Activated T-helper 2 cell treated with anti-CD3 and anti-CD28 coated beads, Interferon-gamma antibody, Interleukin-2, Interleukin-4, amounts not matched to agents 10 μg/mL and 5 μg/mL and 100 μg/mL, durations not matched to agents 14 hours and 24 hours and 36 hours (primary cell): ENCODE measurements at regions of chr15 and their contacts with region 1.

Region 1: GRCh38 chr15:44663409-44664308 is at the start of gene SPG11:
- DNase-seq: peak; percentile 96
- H3K4me3 Mint-ChIP-seq: peak within 1 kb of the TSS; percentile 90
- H3K27ac Mint-ChIP-seq: peak within 1 kb of the TSS; percentile 98
- H3K4me1 Mint-ChIP-seq: peaks cover 49% of the 10 kb centered on the region
- H3K27me3 Mint-ChIP-seq: no peaks in the 10 kb centered on the region
- total RNA-seq, gene SPG11: 71.2 and 75.8 TPM in 2 replicates

Region 2: GRCh38 chr15:44570361-44570760 is 93.3 kb before region 1 on chr15:
- intact Hi-C with region 1: no loop called
- DNase-seq: no peak
- H3K4me3 Mint-ChIP-seq: no peak overlapping the region
- H3K27ac Mint-ChIP-seq: no peak overlapping the region
- H3K4me1 Mint-ChIP-seq: no peaks in the 10 kb centered on the region
- H3K27me3 Mint-ChIP-seq: no peaks in the 10 kb centered on the region

Region 3: DNA sequence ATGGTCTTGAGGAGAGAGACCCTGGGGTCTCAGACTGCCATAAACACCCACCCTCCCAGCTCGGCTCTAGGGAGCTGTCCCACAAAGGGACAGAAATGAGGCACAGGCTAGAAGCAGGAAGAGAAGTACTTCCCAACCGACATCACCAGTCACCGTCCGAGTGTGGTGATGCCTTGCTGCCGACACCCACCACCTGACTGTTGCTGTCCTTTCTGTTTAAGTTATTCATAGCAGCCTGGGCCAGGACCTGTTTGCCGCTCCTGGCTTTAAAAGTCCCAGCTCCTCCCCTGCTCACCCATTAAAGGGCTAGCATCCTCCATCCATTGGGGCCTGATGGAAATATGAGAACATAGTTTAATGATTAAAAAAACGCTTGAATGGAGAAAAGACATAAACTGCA is 13.0 kb after region 1 on chr15:
- intact Hi-C with region 1: loop called (anchors 1 kb)
- DNase-seq: no peak
- H3K4me3 Mint-ChIP-seq: peak overlapping the region; percentile 72
- H3K27ac Mint-ChIP-seq: peak overlapping the region; percentile 95
- H3K4me1 Mint-ChIP-seq: peaks cover 60% of the 10 kb centered on the region
- H3K27me3 Mint-ChIP-seq: no peaks in the 10 kb centered on the region

Region 4: GRCh38 chr15:44682211-44682610 is 18.6 kb after region 1 on chr15:
- intact Hi-C with region 1: loop called (anchors 1 kb)
- DNase-seq: no peak
- H3K4me3 Mint-ChIP-seq: peak overlapping the region; percentile 60
- H3K27ac Mint-ChIP-seq: peak overlapping the region; percentile 87
- H3K4me1 Mint-ChIP-seq: peaks cover 67% of the 10 kb centered on the region
- H3K27me3 Mint-ChIP-seq: no peaks in the 10 kb centered on the region

Region 5: DNA sequence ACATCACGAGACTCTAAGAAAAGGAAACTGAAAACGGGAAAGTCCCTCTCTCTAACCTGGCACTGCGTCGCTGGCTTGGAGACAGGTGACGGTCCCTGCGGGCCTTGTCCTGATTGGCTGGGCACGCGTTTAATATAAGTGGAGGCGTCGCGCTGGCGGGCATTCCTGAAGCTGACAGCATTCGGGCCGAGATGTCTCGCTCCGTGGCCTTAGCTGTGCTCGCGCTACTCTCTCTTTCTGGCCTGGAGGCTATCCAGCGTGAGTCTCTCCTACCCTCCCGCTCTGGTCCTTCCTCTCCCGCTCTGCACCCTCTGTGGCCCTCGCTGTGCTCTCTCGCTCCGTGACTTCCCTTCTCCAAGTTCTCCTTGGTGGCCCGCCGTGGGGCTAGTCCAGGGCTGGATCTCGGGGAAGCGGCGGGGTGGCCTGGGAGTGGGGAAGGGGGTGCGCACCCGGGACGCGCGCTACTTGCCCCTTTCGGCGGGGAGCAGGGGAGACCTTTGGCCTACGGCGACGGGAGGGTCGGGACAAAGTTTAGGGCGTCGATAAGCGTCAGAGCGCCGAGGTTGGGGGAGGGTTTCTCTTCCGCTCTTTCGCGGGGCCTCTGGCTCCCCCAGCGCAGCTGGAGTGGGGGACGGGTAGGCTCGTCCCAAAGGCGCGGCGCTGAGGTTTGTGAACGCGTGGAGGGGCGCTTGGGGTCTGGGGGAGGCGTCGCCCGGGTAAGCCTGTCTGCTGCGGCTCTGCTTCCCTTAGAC is 47.9 kb after region 1 on chr15 and contains the start of gene B2M:
- intact Hi-C with region 1: loop called (anchors 1 kb)
- DNase-seq: peak; percentile 95
- H3K4me3 Mint-ChIP-seq: peak within 1 kb of the TSS; percentile 98
- H3K27ac Mint-ChIP-seq: peak within 1 kb of the TSS; percentile 99
- H3K4me1 Mint-ChIP-seq: peaks cover 44% of the 10 kb centered on the region
- H3K27me3 Mint-ChIP-seq: no peaks in the 10 kb centered on the region
- total RNA-seq, gene B2M: 4,961 and 5,148 TPM in 2 replicates